Adrenal gland (tissue), 19 donors: ENCODE measurements at regions of chr14 and their contacts with region 1.

Region 1: GRCh38 chr14:95683793-95684192 is 2.4 kb upstream of the TCL1B start:
- DNase-seq: peak in 5 of 7 donors; percentile 44 to 69 (median 52)
- H3K4me3 ChIP-seq: no peak overlapping the region
- H3K27ac ChIP-seq: no peak overlapping the region
- H3K4me1 ChIP-seq: peaks cover 0 to 8% of the 10 kb centered on the region in 2 donors
- H3K27me3 ChIP-seq: no peaks in the 10 kb centered on the region
- CTCF ChIP-seq: peak; percentile 35 to 81 (median 65)
- POLR2A ChIP-seq: no peak

Region 2: GRCh38 chr14:95307402-95308062 is 376.3 kb before region 1 on chr14:
- intact Hi-C with region 1: no loop called
- DNase-seq: no peak
- H3K4me3 ChIP-seq: no peak overlapping the region
- H3K27ac ChIP-seq: no peak overlapping the region
- H3K4me1 ChIP-seq: no peaks in the 10 kb centered on the region
- H3K27me3 ChIP-seq: no peaks in the 10 kb centered on the region
- CTCF ChIP-seq: no peak
- POLR2A ChIP-seq: no peak

Region 3: GRCh38 chr14:95577067-95577800 is 106.6 kb before region 1 on chr14:
- intact Hi-C with region 1: no loop called
- DNase-seq: no peak
- H3K4me3 ChIP-seq: no peak overlapping the region
- H3K27ac ChIP-seq: no peak overlapping the region
- H3K4me1 ChIP-seq: no peaks in the 10 kb centered on the region
- H3K27me3 ChIP-seq: no peaks in the 10 kb centered on the region
- CTCF ChIP-seq: no peak
- POLR2A ChIP-seq: no peak

Region 4: GRCh38 chr14:95609387-95609990 is 74.3 kb before region 1 on chr14:
- intact Hi-C with region 1: loop called (anchors 5 kb)
- DNase-seq: peak; percentile 49 to 78 (median 66)
- H3K4me3 ChIP-seq: no peak overlapping the region
- H3K27ac ChIP-seq: no peak overlapping the region
- H3K4me1 ChIP-seq: no peaks in the 10 kb centered on the region
- H3K27me3 ChIP-seq: no peaks in the 10 kb centered on the region
- CTCF ChIP-seq: peak; percentile 50 to 68 (median 64)
- POLR2A ChIP-seq: no peak

Region 5: GRCh38 chr14:95620659-95621059 is 63.1 kb before region 1 on chr14:
- intact Hi-C with region 1: no loop called
- DNase-seq: no peak
- H3K4me3 ChIP-seq: no peak overlapping the region
- H3K27ac ChIP-seq: no peak overlapping the region
- H3K4me1 ChIP-seq: no peaks in the 10 kb centered on the region
- H3K27me3 ChIP-seq: no peaks in the 10 kb centered on the region
- CTCF ChIP-seq: no peak
- POLR2A ChIP-seq: no peak